Activated CD4-positive, alpha-beta memory T cell treated with anti-CD3 and anti-CD28 coated beads for 36 hours (primary cell): ENCODE measurements at regions of chr3 and their contacts with region 1.

Region 1: DNA sequence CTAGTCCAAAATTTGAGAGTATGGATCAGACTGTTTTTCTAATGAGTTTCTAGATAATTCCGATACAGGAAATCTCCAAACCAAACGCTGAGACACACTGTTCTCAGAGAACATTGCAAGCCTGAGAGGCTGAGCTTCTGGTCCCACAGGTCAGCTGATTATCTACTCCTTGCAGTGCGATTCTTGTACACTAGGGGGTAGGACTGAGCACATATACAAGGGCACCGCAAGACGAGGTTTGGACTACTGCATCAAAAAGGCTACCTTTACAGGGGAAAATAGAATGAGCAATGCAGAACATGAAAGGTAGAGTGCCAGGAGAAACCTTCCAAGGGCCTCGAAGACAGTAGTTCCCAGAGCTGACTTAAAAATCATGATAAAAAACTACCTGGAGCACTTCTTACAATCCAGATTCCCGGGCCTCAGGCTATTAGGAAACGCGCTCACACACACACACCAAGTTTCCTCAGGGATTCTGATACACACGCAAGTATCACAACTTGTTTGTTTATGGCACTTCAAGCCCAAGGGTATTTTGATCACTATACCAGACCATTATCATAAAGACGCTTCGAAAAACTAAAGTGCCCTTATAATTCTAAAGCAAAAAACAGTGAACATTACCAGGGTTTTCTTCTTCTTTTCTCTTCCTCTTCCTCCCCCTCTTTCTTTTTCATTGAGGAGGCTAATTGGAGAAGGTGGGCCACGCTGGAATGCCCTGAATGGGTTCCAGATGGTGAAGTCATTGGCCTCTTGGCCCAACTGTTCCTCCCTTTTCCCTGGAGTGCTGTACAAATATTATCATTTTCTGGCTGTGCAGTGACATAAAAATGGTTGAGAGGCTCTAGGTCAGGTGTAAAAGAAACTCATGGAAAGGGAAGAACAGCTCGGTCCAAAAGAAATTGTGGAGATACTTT is 61.8 kb downstream of the SLC12A8 start:
- DNase-seq: peak; percentile 70
- H3K4me3 Mint-ChIP-seq: no peak overlapping the region
- H3K27ac Mint-ChIP-seq: no peak overlapping the region
- H3K4me1 Mint-ChIP-seq: peaks cover 15% of the 10 kb centered on the region
- H3K27me3 Mint-ChIP-seq: peaks cover 13% of the 10 kb centered on the region

Region 2: DNA sequence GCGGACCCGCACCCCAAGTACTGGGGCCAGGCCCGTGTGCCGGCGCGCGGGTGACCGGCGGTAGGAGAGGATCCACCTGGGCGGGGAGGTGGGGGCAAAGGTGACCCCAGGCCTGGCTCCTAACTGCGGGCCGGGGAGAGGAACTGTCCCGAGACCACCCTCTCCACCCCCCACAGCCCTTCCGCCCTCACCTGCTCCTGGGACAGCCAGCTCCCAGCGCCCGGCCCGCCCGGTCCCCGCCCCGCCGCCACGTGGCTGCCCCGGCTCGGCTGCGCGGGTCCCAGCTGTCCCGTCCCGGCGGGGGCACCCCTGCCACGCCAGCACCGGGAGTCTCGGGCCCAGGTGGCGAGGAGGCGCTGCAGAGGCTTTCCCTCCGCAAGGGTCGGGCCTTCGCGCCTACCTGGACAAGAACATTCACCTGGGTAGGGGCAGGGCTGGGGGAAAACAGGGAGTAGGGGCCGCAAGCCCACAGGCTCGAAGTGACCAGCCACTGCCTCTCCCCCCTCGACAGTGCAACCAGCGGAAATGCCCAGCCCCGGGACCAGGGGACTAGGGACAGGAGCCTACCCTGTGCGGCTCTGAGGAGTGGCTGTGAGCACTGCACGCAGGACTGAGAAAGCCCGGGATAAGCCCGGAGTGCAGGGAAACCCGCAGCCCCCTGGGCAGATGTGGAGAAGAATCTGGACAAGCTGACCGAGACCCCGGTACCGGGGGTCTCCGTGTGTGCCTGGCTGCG is 61.9 kb after region 1 on chr3 and contains the start of gene SLC12A8:
- CTCF ChIA-PET with region 1: no interaction called
- POLR2A ChIA-PET with region 1: no interaction called
- intact Hi-C with region 1: loop called (anchors 5 kb)
- DNase-seq: no peak
- H3K4me3 Mint-ChIP-seq: no peak within 1 kb of the TSS
- H3K27ac Mint-ChIP-seq: no peak within 1 kb of the TSS
- H3K4me1 Mint-ChIP-seq: peaks cover 16% of the 10 kb centered on the region
- H3K27me3 Mint-ChIP-seq: peaks cover 45% of the 10 kb centered on the region
- total RNA-seq, gene SLC12A8: 0.48 to 1.00 TPM

Region 3: GRCh38 chr3:125594581-125595011 is 443.8 kb after region 1 on chr3:
- CTCF ChIA-PET with region 1: no interaction called
- POLR2A ChIA-PET with region 1: no interaction called
- intact Hi-C with region 1: loop called (anchors 5 kb)
- DNase-seq: peak; percentile 23
- H3K4me3 Mint-ChIP-seq: peak overlapping the region; percentile 91
- H3K27ac Mint-ChIP-seq: peak overlapping the region; percentile 62
- H3K4me1 Mint-ChIP-seq: peaks cover 33% of the 10 kb centered on the region
- H3K27me3 Mint-ChIP-seq: no peaks in the 10 kb centered on the region